Posterior cingulate gyrus (tissue), 11 donors: ENCODE measurements at regions of chr1 and their contacts with region 1.

Region 1: GRCh38 chr1:116853670-116854402 is 55.9 kb upstream of the PTGFRN start:
- DNase-seq: no peak

Region 2: DNA sequence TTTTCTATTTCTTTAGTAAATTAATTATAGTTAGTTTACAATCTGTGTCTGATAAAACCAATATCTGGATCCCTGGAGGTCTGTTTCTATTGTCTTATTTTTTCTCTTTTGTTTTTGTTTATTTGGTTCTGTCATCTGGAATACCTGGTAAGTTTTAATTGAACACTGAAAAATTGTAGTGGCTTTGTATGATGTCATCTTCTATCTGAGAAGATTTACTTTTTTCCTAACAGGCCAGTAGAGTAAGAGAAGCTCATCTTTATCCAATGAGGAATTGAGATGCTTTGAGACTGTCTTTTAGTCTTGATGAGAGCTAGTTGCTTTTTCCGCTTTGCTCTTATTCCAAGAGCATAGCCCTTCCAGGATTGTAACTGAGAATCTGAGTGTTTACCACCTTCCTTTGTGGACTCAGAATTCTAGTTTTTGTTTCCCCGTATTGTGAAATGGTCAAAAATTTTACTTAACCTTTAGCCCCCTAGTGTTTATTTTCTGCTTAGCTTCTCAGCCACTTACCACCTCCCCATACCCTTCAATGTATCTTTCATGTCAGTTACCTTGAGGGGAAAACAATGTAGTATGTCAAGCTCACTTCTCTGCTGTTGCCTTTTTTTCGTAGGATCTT is 80.9 kb after region 1 on chr1:
- intact Hi-C with region 1: no loop called
- DNase-seq: no peak

Region 3: DNA sequence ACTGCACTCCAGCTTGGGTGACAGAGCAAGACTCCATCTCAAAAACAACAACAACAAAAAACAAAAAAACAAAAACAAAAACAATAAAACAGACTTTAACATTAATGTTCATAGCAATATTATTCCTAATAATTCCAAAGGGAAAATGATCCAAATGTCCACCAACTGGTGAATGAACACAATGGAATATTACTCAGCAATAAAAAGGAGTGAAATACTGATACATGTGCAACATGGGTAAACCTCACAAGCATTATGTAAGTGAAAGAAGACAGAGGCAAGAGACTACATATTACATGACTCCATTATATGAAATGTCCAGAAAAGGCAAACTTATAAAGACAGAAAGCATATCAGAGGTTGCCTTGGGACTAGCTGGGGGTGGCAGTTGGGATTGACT is 200.2 kb after region 1 on chr1:
- intact Hi-C with region 1: loop called (anchors 2 kb)
- DNase-seq: no peak